Activated B cell treated with CpG ODN at 0.5 μM for 24 hours (primary cell): ENCODE measurements at regions of chr3 and their contacts with region 1.

Region 1: DNA sequence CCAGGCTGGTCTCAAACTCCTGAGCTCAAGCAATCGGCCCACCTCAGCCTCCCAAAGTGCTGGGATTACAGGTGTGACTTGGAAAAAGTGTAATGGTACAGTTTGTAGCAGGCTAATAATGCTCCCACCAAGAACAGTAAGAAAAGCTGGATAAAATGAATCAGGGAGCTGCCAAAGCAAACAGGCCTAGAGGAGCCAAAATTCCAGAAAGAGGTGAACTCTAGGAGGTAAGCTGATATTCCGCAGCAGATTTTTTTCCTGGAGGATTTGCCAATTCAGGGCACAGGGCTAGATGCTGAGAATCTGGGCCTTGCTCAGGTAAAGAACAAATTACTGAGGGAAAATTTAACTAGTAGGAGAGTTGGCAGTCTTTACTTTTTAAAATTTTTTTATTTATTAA is 11.0 kb upstream of the PCYT1A start:
- DNase-seq: no peak
- ATAC-seq: no peak
- H3K4me3 Mint-ChIP-seq: no peak overlapping the region
- H3K27ac Mint-ChIP-seq: no peak overlapping the region
- H3K4me1 Mint-ChIP-seq: peaks cover 22% of the 10 kb centered on the region
- H3K27me3 Mint-ChIP-seq: no peaks in the 10 kb centered on the region
- CTCF ChIP-seq: no peak

Region 2: DNA sequence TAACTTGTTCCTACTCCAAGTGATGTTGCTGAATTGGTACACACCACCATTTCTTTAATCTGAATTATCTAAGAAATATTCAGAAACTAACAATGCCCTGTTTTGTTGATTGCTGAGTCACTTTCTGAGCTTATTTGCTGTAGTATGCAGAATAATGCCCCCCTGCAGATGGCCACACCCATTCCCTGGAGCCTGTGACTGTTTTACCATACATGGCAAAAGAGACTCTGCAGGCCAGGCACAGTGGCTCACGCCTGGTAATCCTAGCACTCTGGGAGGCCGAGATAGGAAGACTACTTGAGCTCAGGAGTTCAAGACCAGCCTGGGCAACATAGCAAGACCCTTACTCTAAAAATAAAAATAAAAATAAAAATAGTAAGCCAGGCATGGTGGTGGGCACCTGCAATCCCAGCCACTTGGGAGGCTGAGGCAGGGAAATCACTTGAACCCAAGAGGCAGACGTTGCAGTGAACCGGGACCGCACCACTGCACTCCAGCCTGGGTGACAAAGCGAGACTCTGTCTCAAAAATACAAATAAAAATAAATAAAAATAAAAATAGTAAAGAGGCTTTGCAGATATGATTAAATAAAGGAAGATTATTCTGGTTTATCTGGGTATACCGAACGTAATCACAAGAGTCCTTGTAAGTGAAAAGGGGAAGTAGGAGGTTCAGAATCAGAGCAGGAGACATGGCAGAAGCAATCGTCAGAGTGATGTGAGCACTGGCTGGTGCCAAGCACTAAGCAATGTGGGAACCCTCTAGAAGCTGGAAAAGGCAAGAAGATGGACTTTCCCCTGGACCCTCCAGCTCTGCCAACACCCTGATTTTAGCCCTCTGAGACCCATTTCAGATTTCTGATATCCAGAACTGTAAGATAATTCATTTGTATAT is 30.0 kb before region 1 on chr3:
- CTCF ChIA-PET with region 1: no interaction called
- POLR2A ChIA-PET with region 1: no interaction called
- intact Hi-C with region 1: loop called (anchors 5 kb)
- DNase-seq: no peak
- ATAC-seq: peak; percentile 79
- H3K4me3 Mint-ChIP-seq: no peak overlapping the region
- H3K27ac Mint-ChIP-seq: peak overlapping the region; percentile 59
- H3K4me1 Mint-ChIP-seq: peaks cover 15% of the 10 kb centered on the region
- H3K27me3 Mint-ChIP-seq: no peaks in the 10 kb centered on the region
- CTCF ChIP-seq: no peak